Head of caudate nucleus (tissue), 42 donors: ENCODE measurements at regions of chr20 and their contacts with region 1.

Region 1: GRCh38 chr20:32277361-32278198 is at the start of gene KIF3B:
- DNase-seq: peak; percentile 82 to 97 (median 92)

Region 2: GRCh38 chr20:32207626-32208498 is 69.7 kb before region 1 on chr20 and contains the starts of genes PLAGL2 and POFUT1:
- intact Hi-C with region 1: loop called (anchors 10 kb)
- DNase-seq: peak; percentile 66 to 97 (median 93)